ENCODE measurements at regions of chr7 and their contacts with region 1.

Region 1: GRCh38 chr7:48109848-48110663 is 21.0 kb downstream of the UPP1 start:
- DNase-seq: peak; percentile 81 to 96
- H3K4me3 ChIP-seq: no peak overlapping the region
- CTCF ChIP-seq: peak in 2 of 3 donors; percentile 71 to 97
- POLR2A ChIP-seq: no peak

Region 2: DNA sequence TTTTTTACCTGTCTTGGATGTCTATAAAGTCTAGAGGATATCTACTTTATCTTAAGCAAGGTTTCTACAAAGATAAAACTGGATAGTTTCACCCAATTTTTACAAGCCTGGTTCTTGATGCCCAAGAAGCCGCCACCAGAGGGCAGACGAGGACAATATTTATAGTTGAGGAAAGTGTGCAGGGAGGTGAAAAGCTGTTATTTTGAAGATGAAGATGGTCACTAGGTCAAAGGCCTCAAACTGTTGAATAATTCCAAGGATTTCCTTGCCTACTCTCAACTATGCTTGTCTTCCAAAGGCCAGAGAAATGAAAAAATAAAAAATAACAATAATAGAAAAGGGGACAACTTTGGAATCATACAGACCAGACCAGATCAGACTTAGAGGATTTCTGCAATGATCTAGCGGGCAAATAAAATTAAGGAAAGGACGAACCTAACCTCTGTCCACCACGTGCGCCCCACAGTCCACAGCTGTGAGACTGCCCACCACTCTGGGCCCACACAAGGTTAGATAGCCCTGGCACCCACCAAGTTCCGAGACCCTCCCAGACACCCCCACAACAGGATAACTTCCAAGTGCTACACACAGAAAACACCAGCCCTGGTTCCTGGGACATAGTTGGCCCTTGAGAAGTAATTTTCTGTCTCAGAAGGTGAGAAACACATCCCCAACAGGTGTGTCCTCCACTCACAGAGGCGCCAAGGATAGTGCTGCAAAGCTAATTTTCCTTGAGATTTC is 164.6 kb before region 1 on chr7:
- intact Hi-C with region 1: loop called (anchors 5 kb)
- DNase-seq: peak; percentile 80 to 95
- H3K4me3 ChIP-seq: no peak overlapping the region
- CTCF ChIP-seq: no peak
- POLR2A ChIP-seq: no peak

Region 3: DNA sequence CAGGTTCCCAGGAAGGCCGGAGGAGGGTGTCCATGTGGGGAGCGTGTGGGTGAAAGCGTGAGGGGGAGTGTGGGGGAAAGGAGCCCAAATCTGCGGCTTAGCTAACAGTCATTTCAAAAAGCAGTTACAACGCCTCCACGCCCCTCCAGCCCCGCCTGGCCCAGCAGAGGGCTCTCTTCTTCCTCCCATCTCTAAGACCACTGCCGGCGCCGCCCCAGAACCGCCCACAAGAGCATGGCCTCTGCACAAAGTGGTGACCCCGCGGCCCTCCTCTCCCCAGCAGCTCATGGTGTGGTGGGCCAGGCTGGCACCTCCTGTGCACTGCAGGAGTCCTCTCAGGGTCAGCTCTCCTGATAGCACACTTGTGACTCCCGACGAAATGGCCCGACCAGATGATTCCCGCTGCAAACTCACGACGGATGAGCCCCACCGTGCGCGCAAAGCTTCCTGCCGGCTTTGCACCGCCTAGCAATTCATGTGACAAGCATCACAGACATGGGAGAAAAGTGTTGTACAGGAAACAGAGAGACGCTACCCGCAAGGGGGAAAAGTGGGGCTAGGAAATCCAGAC is 118.2 kb before region 1 on chr7:
- intact Hi-C with region 1: loop called (anchors 10 kb)
- DNase-seq: peak; percentile 86 to 98
- H3K4me3 ChIP-seq: peak overlapping the region; percentile 34
- CTCF ChIP-seq: no peak
- POLR2A ChIP-seq: no peak

Region 4: DNA sequence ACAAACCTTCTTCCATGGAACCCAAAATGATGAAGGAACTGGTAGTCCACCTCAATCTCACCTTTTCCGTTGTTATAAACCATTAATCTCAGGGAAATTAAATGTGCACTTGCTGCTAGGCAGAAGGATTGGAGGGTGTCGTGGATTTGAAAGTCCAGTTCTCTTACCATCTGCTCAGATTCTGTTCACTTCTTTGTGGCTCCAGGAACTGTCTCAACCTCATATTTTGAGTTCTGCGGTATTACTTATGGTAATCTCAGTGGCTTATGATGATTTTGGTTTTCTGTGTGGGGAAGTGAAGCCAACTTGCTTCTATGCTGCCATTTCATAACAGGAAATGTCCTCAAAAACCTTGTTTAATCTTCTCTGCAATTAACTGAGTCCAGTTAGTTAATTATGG is 950.7 kb after region 1 on chr7:
- intact Hi-C with region 1: no loop called
- DNase-seq: no peak
- H3K4me3 ChIP-seq: no peak overlapping the region
- CTCF ChIP-seq: no peak
- POLR2A ChIP-seq: no peak

Region 5: GRCh38 chr7:49367072-49367471 is 1257.0 kb after region 1 on chr7:
- intact Hi-C with region 1: no loop called
- DNase-seq: no peak
- H3K4me3 ChIP-seq: no peak overlapping the region
- CTCF ChIP-seq: no peak
- POLR2A ChIP-seq: no peak

Measured in lower leg skin (tissue), 4 donors.